ENCODE measurements at regions of chrX and their contacts with region 1.

Region 1: GRCh38 chrX:36983831-36984230 is 24.3 kb upstream of the FAM47C start:
- DNase-seq: no peak
- H3K4me3 Mint-ChIP-seq: no peak overlapping the region
- H3K27ac Mint-ChIP-seq: no peak overlapping the region
- H3K4me1 Mint-ChIP-seq: peaks cover 9% of the 10 kb centered on the region
- H3K27me3 Mint-ChIP-seq: no peaks in the 10 kb centered on the region
- CTCF ChIP-seq: no peak

Region 2: DNA sequence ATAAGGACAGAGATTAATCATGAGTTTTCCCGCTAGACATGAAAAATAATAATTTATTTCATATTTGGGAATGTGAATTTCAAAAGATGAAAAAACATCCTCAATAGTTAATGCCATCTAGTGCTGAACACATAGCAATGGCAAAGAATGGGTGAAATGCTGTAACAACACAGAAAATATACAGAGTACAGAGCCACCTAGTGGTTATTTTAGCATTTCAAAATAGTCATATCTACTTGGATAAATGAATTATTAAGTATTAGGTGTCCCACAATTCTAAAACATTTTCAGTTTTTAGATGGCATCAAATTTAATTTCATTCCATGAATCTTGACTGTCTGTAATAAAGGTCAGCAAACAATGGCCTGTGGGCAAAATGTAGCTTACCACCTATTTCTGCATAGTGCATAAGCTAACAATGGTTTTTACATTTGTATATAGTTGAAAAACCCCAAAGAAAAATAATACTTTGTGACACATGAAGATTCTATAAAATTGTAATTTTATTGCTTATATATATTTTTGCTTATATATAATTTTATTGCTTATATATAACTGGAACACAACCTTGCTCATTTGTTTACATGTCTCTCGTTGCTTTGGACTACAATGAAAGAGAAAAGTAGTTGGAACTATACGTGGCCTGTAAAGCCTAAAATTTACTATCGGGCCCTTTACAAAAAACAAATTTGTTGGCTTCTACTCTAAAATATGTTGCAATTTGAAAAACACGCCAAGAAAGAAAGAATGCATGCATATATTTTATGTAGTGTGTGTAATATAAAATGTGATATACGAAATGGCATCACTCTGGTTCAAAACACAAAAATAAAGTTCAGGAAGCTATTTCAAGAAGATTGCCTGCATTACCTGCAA is 74.8 kb before region 1 on chrX:
- CTCF ChIA-PET with region 1: no interaction called
- intact Hi-C with region 1: no loop called
- DNase-seq: no peak
- H3K4me3 Mint-ChIP-seq: no peak overlapping the region
- H3K27ac Mint-ChIP-seq: no peak overlapping the region
- H3K4me1 Mint-ChIP-seq: no peaks in the 10 kb centered on the region
- H3K27me3 Mint-ChIP-seq: no peaks in the 10 kb centered on the region
- CTCF ChIP-seq: peak; percentile 51

Region 3: GRCh38 chrX:37060999-37061398 is 77.2 kb after region 1 on chrX:
- CTCF ChIA-PET with region 1: no interaction called
- intact Hi-C with region 1: loop called (anchors 2 kb)
- DNase-seq: peak; percentile 57
- H3K4me3 Mint-ChIP-seq: no peak overlapping the region
- H3K27ac Mint-ChIP-seq: no peak overlapping the region
- H3K4me1 Mint-ChIP-seq: no peaks in the 10 kb centered on the region
- H3K27me3 Mint-ChIP-seq: no peaks in the 10 kb centered on the region
- CTCF ChIP-seq: no peak